ENCODE measurements at regions of chr15 and their contacts with region 1.

Region 1: DNA sequence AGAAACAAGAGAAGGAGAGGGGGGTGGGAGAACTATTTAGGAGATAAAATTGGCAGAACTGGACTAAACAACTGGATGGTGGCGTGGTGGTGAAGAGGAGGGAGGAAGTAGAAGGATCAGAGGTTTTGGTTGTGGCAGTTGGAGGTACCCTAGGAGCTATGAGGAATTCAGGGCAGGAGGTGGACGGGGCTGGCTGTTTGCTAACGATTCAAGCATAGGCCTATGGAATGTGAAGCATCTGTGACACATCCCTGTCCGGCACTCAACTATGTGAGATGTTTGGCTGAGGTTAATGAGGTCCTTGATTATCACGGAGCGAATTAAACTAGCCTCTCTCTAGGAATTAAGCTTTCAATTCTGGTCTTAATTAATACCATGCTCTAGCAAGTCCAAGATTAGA is 13.5 kb downstream of the TARS3 start:
- H3K4me3 ChIP-seq: no peak overlapping the region
- H3K27ac ChIP-seq: no peak overlapping the region
- H3K4me1 ChIP-seq: no peaks in the 10 kb centered on the region
- CTCF ChIP-seq: no peak

Region 2: DNA sequence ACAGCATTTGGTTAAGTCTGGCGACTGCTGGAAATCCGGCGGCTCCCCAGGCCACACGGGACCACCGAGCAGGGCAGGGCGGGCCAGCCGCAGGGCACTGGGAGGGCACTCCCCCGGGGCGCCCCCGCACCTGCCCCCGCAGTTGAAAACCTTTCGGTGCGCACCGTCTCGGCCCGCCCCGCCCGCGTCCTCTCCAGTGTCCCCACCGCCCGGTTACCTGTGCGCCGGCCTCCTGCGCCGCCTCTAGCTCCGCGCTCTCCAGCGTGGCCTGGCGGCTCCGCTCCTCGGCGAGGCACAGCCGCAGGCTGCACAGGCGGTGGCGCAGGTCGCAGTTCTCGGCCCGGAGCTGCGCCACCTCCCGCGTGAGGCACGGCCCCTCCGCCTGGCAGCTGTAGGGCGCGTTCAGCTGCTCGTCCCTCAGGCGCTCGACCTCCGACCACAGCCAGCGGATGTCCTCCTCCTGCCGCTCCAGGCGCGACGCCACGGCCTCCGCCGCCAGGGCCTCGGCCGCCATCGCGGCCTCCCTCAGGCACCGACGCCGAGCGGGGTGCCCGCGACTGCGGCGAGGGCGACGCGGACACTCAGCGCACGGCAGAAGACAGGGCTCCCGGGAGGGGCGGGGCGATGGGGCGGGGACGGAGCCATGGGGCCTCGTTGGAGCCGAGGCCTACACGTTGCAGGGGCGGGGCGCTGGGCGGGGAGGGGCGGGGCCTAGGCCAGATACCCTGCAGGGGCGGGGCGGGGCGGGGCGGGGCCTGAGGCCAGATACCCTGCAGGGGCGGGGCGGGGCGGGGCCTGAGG is 13.3 kb after region 1 on chr15 and contains the start of gene TARS3:
- CTCF ChIA-PET with region 1: interaction called, 5 read pairs
- POLR2A ChIA-PET with region 1: interaction called, 13 read pairs
- H3K4me3 ChIP-seq: peak within 1 kb of the TSS; percentile 76
- H3K27ac ChIP-seq: peak within 1 kb of the TSS; percentile 93
- H3K4me1 ChIP-seq: peaks cover 6% of the 10 kb centered on the region
- CTCF ChIP-seq: peak; percentile 100

Region 3: GRCh38 chr15:101795455-101795854 is 84.6 kb after region 1 on chr15:
- CTCF ChIA-PET with region 1: no interaction called
- POLR2A ChIA-PET with region 1: no interaction called
- H3K4me3 ChIP-seq: no peak overlapping the region
- H3K27ac ChIP-seq: no peak overlapping the region
- H3K4me1 ChIP-seq: no peaks in the 10 kb centered on the region
- CTCF ChIP-seq: no peak